Activated T-helper 2 cell treated with anti-CD3 and anti-CD28 coated beads, Interferon-gamma antibody, Interleukin-2, Interleukin-4, amounts not matched to agents 10 μg/mL and 5 μg/mL and 100 μg/mL, durations not matched to agents 14 hours and 24 hours and 36 hours (primary cell): ENCODE measurements at regions of chr11 and their contacts with region 1.

Region 1: GRCh38 chr11:33257897-33258630 is 883 bp downstream of the HIPK3 start:
- DNase-seq: peak; percentile 75
- H3K4me3 Mint-ChIP-seq: peak overlapping the region; percentile 86
- H3K27ac Mint-ChIP-seq: peak overlapping the region; percentile 99
- H3K4me1 Mint-ChIP-seq: peaks cover 32% of the 10 kb centered on the region
- H3K27me3 Mint-ChIP-seq: no peaks in the 10 kb centered on the region

Region 2: DNA sequence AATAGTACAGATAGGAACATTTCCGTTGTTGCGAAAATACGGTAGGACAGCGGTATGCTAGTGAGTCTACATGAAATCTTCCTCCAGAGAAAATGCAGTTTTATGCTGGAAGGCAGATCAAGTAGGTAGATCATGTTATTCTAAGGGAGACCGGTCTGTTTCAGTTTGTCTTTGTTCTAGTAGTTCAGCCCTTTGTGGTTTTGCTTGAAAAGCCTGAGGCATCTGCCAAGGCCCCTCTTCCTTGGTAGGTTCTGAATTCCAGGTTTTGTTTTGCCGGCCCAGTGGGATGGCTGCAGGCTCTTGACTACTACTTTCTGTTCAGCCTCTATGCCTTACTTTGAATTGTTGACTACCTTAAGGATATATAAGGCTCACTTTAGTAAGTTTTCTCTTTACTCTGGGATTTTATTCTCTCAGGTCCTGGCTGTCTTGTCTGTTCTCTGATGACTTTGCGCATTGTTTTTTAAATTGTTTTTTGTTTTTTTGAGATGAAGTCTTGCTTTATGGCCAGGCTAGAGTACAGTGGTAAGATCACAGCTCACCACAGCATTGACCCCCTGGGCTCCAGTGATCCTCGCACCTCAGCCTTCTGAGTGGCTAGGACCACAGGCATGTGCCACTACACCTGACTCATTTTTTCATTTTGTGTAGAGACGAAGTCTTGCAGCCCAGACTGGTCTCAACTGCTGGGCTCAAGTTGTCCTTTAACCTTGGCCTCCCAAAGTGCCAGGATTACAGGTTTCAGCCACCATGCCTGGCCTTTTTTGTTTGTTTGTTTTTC is 52.8 kb after region 1 on chr11:
- intact Hi-C with region 1: no loop called
- DNase-seq: no peak
- H3K4me3 Mint-ChIP-seq: no peak overlapping the region
- H3K27ac Mint-ChIP-seq: no peak overlapping the region
- H3K4me1 Mint-ChIP-seq: peaks cover 8% of the 10 kb centered on the region
- H3K27me3 Mint-ChIP-seq: no peaks in the 10 kb centered on the region

Region 3: GRCh38 chr11:33329705-33330329 is 71.8 kb after region 1 on chr11:
- intact Hi-C with region 1: loop called (anchors 10 kb)
- DNase-seq: no peak
- H3K4me3 Mint-ChIP-seq: no peak overlapping the region
- H3K27ac Mint-ChIP-seq: no peak overlapping the region
- H3K4me1 Mint-ChIP-seq: peaks cover 7% of the 10 kb centered on the region
- H3K27me3 Mint-ChIP-seq: no peaks in the 10 kb centered on the region